Left cardiac atrium (tissue), 4 donors: ENCODE measurements at regions of chr3 and their contacts with region 1.

Region 1: DNA sequence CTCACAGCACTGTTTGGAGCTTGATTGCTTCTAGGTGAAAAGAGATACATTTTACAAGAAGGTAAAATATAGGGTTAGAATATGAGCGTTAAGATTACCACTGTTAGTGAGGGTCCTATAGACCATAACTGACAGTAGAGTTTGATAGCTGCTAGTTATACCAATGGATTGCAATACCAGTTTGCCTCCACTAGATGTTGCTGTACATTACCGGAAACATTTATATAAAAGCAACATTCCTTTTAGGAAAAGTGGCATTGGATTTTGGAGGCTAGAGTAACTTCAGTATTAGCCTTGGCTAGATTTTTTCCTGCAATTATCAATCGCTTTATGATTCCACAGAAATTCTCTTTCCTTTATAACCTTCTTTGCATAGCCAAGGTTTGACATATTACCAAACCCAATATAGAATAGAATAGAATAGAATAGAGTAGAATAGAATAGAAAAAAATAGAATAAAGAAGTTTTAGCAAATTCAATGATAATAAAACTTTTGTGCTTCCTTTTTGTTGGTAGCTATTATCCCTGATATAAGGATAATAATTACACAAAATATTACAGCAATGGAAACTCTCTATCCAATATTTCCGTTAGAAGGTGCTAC is 1093.6 kb upstream of the ALCAM start:
- DNase-seq: no peak
- ATAC-seq: no peak

Region 2: DNA sequence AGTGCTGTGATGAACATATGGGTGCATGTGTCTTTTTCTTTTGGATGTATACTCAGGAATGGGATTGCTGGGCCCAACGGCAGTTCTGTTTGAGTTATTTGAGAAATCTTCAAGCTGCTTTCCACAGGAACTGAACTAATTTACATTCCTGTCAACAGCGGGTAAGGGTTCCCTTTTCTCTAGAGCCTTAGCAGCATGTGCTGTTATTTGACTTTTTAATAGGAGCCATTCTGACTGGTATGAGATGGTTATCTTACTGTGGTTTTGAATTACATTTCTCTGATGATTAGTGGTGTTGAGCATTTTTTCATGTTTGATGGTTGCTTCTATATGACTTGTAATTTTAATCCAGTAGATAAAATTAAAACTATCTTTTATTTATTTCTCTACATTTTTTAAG is 75.0 kb before region 1 on chr3:
- intact Hi-C with region 1: no loop called
- DNase-seq: no peak
- ATAC-seq: no peak

Region 3: DNA sequence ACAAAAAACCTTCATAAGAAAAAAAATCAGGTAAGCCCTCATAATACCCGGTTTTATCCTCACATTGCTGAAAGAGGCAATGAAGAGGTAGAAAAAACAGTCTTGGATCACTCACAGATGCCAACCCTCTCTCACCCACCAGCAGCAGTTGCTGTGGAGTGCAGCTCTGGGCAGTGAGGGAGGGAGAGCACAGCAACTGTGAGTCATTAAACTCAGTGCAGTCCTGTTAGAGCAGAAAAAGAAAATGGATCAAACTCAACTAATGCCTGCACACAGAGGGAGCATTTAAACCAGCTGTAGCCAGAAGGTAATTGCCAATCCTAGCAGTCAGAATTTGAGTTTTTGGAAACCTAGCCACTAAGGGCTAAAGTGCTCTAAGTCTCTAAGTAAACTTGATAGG is 43.0 kb after region 1 on chr3:
- intact Hi-C with region 1: no loop called
- DNase-seq: no peak
- ATAC-seq: no peak

Region 4: GRCh38 chr3:105518806-105519418 is 1245.8 kb after region 1 on chr3:
- intact Hi-C with region 1: loop called in 1 of 2 experiments (anchors 10 kb)
- DNase-seq: no peak
- ATAC-seq: peak; percentile 37 to 53